Activated CD4-positive, alpha-beta memory T cell treated with anti-CD3 and anti-CD28 coated beads for 36 hours (primary cell): ENCODE measurements at regions of chr1 and their contacts with region 1.

Region 1: DNA sequence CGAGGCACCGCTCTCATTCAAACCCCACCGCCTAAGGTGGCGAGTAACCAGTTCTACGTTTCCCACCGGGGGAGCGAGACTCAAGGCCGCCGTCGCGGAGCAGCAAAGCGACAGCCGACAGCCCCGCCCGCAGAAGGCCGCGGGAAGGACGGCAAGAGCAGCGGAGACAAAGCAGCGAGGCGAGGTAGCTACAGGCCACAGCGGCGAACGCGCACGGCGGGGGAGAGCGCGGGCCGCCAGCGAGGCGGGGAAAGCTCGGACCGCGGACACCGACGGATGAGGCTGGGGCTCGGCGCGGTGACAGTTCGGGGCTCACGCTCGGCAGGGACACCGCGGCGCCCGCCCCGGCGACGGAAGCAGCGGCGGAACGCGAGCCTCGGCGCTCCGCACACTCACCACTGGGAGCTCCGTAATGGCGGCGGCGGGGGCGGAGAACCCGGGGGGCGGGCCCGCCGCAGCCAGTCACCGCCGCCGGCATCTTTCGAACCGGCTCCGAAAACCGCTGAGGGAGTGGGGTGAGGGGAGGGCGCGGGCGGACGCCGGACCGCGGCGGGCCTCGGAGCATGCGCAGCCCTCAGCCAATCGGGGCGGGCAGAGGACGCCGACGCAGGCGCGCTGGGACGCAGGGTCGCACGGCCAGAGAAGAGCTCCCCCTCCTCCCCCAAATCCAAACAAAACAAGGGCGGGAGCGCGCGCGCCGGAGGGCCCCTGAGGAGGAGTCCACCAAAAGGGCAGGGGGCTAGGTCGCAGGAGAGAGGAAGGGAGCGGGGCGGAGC is 666 bp downstream of the HP1BP3 start:
- DNase-seq: peak; percentile 97
- H3K4me3 Mint-ChIP-seq: peak overlapping the region; percentile 92
- H3K27ac Mint-ChIP-seq: peak overlapping the region; percentile 93
- H3K4me1 Mint-ChIP-seq: peaks cover 27% of the 10 kb centered on the region
- H3K27me3 Mint-ChIP-seq: peaks cover 3% of the 10 kb centered on the region

Region 2: GRCh38 chr1:19606817-19607642 is 1179.4 kb before region 1 on chr1:
- CTCF ChIA-PET with region 1: no interaction called
- POLR2A ChIA-PET with region 1: no interaction called
- intact Hi-C with region 1: no loop called
- DNase-seq: peak; percentile 69
- H3K4me3 Mint-ChIP-seq: no peak overlapping the region
- H3K27ac Mint-ChIP-seq: peak overlapping the region; percentile 75
- H3K4me1 Mint-ChIP-seq: peaks cover 57% of the 10 kb centered on the region
- H3K27me3 Mint-ChIP-seq: no peaks in the 10 kb centered on the region

Region 3: DNA sequence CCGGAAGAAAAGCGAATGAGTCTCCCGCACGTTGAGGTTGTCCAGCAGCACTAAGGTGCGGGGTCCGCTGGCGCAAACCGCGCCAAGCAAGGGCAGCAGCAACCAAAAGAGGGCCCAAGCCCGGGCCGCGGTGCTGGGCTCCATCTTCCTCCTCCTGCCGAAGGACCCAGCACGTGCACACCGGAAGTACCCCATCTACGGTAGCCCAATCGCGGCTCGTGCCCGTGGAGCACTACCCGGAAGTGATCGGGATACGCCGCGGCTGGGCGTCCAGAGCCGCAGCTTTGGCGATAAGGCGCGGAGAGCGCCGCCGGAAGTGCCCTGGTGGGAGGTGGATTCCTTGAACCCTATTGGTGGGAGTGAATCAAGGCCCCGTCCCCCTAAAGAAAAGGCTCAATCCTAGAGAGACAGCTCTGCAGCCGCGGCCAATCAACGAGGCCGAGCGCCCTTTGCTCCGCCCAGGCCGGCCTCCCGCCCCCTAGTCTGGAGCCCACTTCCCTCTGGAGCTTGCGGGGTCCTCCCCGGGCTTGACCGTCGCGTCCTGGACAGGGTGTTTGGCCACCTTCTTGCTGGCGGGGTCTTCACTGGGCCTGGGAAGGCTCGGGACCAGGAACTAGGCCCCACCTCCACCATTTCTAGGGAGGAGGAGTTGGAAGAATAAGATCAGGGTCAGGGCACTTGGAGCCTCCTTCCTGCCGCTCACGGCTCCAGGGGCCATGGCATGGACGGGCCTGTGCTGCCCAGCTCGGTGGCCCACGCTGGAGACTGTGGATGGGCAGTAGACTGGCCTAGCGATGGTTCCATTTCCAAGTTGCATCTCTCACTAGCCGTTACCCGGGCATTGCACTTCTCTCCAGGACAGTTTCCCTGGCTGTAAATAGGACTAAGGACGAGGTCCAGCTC is 125.0 kb before region 1 on chr1 and contains the start of gene DDOST:
- CTCF ChIA-PET with region 1: no interaction called
- POLR2A ChIA-PET with region 1: no interaction called
- intact Hi-C with region 1: loop called (anchors 2 kb)
- DNase-seq: peak; percentile 98
- H3K4me3 Mint-ChIP-seq: peak within 1 kb of the TSS; percentile 100
- H3K27ac Mint-ChIP-seq: peak within 1 kb of the TSS; percentile 98
- H3K4me1 Mint-ChIP-seq: peaks cover 46% of the 10 kb centered on the region
- H3K27me3 Mint-ChIP-seq: no peaks in the 10 kb centered on the region
- total RNA-seq, gene DDOST: 165 to 180 TPM

Region 4: DNA sequence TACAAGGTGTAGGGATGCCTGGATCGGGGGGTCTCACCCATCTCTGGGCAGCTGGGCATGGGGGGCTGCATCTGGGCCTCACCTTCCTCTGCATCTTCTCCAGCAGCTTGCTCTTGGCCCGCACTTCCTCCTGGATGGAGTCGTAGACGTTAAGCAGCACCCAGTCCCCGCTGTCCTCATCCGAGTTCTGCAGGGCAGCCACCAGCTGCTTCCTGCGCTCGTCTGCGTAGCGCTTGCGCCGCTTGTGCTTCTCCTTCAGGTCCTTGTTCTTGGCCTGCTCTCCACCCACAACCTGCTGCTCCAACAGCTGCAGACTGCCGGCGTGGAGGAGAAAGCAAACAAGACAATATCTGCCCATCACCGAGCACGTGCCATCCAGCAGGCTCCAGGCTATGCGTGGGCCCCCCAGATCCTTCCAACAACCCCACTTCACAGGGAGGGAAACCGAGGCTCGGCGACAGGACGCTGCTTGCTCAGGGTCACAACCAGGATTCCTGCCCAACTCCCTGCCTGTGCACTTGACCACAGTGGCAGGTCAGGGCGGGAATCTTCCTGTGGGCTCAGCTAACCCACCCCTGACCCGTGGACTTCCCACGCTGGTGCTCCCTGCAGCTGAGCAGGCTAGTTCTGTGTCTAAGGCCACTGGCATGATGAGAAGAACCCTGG is 103.7 kb before region 1 on chr1:
- CTCF ChIA-PET with region 1: no interaction called
- POLR2A ChIA-PET with region 1: no interaction called
- intact Hi-C with region 1: no loop called
- DNase-seq: no peak
- H3K4me3 Mint-ChIP-seq: no peak overlapping the region
- H3K27ac Mint-ChIP-seq: no peak overlapping the region
- H3K4me1 Mint-ChIP-seq: peaks cover 8% of the 10 kb centered on the region
- H3K27me3 Mint-ChIP-seq: peaks cover 10% of the 10 kb centered on the region

Region 5: DNA sequence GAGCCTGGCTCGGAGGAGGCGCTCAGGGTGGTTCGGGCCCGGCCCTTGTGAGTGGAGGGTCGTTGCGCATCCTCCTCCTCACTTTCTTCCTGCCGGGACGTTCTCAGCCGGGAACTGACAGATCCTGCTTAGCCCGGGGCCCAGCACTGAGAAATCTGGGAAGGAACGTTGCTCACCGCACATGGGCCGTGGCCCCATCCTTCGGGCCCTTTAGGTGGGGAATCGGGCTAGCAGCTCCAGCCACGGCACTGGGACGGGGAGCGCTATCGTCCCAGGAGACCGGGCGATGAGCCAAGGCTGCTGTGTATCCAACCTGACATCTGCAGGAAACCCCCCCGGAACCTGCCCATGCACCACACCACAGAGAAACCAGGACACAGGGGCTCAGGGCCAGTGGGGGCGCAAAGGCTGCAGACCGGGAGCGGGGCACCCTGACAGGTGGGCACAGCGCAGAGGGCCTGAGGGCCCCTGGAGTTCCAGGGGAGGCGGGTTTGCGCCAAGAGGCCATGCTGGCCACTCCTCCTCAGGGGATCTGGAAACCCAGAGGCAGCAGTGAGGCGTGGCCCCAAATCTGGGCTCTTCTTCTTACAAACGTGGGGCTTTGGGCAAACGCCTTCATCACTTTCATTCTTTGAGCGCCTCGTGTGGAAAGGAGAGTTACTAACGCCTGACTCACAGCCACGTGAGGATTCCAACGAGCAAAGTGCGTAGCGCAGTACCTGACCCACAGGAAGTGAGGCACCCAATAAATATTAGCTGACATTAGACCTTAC is 53.7 kb before region 1 on chr1 and contains the start of gene SH2D5:
- CTCF ChIA-PET with region 1: no interaction called
- POLR2A ChIA-PET with region 1: interaction called, 5 read pairs
- intact Hi-C with region 1: loop called (anchors 2 kb)
- DNase-seq: peak; percentile 85
- H3K4me3 Mint-ChIP-seq: peak within 1 kb of the TSS; percentile 74
- H3K27ac Mint-ChIP-seq: no peak within 1 kb of the TSS
- H3K4me1 Mint-ChIP-seq: peaks cover 21% of the 10 kb centered on the region
- H3K27me3 Mint-ChIP-seq: peaks cover 19% of the 10 kb centered on the region
- total RNA-seq, gene SH2D5: 0.07 to 0.12 TPM

Region 6: DNA sequence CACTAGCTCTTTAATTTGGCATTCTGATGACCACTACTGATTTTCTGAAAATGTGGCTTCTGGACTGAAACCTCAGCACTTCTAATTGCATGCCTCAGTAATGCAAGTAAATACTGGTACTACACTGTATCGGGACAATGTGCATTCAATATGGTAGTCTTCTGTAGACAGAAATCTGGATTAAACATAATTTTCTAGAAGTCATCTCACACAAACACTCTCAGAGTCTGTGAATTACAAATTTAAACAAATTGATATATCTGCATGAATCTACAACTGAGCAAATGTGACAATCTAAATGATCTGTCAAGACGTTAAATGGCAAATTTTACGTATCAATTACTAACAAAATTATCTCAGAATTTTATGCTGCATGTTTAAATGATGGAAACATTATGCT is 23.0 kb before region 1 on chr1:
- CTCF ChIA-PET with region 1: no interaction called
- POLR2A ChIA-PET with region 1: no interaction called
- intact Hi-C with region 1: no loop called
- DNase-seq: no peak
- H3K4me3 Mint-ChIP-seq: no peak overlapping the region
- H3K27ac Mint-ChIP-seq: no peak overlapping the region
- H3K4me1 Mint-ChIP-seq: no peaks in the 10 kb centered on the region
- H3K27me3 Mint-ChIP-seq: no peaks in the 10 kb centered on the region

Region 7: GRCh38 chr1:20867062-20867461 is 80.6 kb after region 1 on chr1:
- CTCF ChIA-PET with region 1: no interaction called
- POLR2A ChIA-PET with region 1: no interaction called
- intact Hi-C with region 1: no loop called
- DNase-seq: no peak
- H3K4me3 Mint-ChIP-seq: no peak overlapping the region
- H3K27ac Mint-ChIP-seq: no peak overlapping the region
- H3K4me1 Mint-ChIP-seq: peaks cover 7% of the 10 kb centered on the region
- H3K27me3 Mint-ChIP-seq: no peaks in the 10 kb centered on the region